Caco-2 (cell line): ENCODE measurements at regions of chr14 and their contacts with region 1.

Region 1: DNA sequence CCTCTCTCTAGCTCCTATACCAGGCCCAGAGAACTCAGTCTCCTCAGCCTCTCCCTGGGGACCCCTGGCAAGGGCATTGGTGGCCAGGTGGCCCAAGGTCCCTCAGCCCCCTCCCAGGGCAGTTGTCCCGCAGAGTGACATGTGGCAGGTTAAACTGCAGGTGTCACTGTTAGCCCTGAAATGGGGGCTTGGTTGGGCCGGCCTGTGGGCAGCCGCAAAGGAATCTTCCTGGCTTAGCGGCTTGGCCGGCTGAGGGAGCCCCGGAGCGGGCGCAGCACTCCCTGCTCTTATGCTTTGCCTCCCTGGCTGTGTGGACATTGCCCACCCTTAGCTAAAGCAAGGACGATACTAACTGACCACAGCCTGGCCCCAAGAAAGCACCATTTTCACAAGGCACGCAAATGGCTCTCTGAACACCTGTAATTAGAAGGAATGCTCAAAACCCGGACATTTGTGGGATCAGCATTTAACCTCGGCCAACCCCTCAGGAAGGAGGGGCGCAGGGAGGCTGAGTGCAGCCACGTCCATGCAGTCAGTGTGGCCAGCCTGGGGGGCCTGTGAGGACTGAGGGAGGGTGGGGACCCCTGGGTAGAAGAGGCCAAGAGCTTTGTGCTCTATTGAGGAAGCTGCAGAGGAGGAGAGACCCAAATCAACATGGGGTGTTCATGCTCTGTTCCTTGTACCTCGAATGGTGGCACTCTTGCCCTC is 82.2 kb downstream of the PAPOLA start:
- DNase-seq: peak; percentile 74 to 84
- H3K4me3 ChIP-seq: no peak overlapping the region
- H3K4me3 Mint-ChIP-seq: no peak overlapping the region
- H3K27ac Mint-ChIP-seq: no peak overlapping the region
- H3K4me1 ChIP-seq: no peaks in the 10 kb centered on the region
- H3K4me1 Mint-ChIP-seq: no peaks in the 10 kb centered on the region
- H3K27me3 ChIP-seq: no peaks in the 10 kb centered on the region
- H3K27me3 Mint-ChIP-seq: peaks cover 7% of the 10 kb centered on the region
- CTCF ChIP-seq: peak; percentile 74 to 90

Region 2: GRCh38 chr14:96666088-96666487 is 81.7 kb after region 1 on chr14:
- CTCF ChIA-PET with region 1: no interaction called
- POLR2A ChIA-PET with region 1: no interaction called
- intact Hi-C with region 1: loop called (anchors 1 kb)
- DNase-seq: peak in 1 of 2 experiments; percentile 7
- H3K4me3 ChIP-seq: no peak overlapping the region
- H3K4me3 Mint-ChIP-seq: no peak overlapping the region
- H3K27ac Mint-ChIP-seq: no peak overlapping the region
- H3K4me1 ChIP-seq: peaks cover 2% of the 10 kb centered on the region; the same call in 1 of the 2 replicates
- H3K4me1 Mint-ChIP-seq: peaks cover under 1% of the 10 kb centered on the region
- H3K27me3 ChIP-seq: peaks cover 1% of the 10 kb centered on the region; the same call in 1 of the 2 replicates
- H3K27me3 Mint-ChIP-seq: peaks cover 23% of the 10 kb centered on the region
- CTCF ChIP-seq: no peak

Region 3: DNA sequence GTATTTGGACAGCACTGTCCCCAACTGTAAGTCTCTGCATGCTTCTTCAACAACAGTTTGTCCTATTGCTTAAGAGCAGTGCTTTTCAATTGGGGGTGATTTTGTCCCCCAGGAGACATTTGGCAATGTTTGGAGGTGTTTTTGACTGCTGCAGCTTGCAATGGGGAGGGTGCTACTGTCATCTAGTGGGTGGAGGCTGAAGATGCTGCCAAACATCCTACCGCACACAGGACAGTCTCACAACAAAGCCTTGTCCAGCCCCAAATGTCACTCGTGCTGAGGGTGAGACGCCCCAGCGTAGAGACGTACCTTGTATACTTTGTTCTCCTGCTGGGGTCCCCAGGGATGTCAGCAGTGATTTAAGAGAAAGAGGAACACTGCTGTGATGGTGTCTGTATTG is 94.7 kb after region 1 on chr14:
- CTCF ChIA-PET with region 1: no interaction called
- POLR2A ChIA-PET with region 1: no interaction called
- intact Hi-C with region 1: loop called (anchors 1 kb)
- DNase-seq: no peak
- H3K4me3 ChIP-seq: no peak overlapping the region
- H3K4me3 Mint-ChIP-seq: no peak overlapping the region
- H3K27ac Mint-ChIP-seq: no peak overlapping the region
- H3K4me1 ChIP-seq: no peaks in the 10 kb centered on the region
- H3K4me1 Mint-ChIP-seq: no peaks in the 10 kb centered on the region
- H3K27me3 ChIP-seq: no peaks in the 10 kb centered on the region; the same call in 1 of the 2 replicates
- H3K27me3 Mint-ChIP-seq: peaks cover 18% of the 10 kb centered on the region
- CTCF ChIP-seq: no peak

Region 4: DNA sequence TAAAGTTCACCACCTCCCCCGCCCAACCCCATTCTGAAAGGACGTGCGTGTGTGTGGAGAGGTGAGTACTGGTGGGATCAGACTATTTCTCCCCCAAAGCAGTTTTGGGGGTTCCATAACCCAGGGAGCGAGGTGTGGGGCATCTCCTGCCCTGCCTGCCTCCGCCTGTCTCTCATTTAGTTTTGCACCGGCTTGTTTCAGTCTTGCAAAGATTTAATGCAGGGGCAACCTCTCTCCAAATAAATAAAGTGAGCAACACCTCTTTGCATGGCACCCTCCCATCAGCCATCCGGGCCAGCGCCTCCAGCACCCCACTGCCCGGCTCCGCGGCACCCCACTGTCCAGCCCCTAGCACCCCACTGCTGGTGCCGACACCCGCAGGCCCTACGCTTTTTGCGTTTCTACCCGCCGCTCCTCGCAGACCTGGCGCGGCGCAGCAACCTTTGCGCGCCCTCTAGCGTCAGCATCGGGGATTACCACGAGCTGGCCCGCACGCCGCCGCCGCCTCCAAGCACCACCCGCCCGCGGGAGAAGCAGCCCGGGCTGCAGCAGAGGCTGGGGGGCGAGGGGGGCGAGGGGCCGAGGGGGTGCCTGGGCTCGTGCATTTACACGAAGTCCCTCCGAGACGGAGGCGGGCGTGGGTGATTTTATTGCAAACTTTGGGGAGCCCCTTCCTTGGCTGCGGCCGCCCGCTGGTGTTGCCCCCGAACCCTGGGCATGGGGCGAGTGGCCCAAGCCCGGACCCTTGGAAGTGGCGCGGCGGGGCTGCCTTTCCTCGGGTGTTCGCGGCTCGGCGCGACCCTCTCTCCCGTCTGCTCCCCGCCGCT is 157.0 kb after region 1 on chr14:
- CTCF ChIA-PET with region 1: interaction called, 3 read pairs
- POLR2A ChIA-PET with region 1: interaction called, 3 read pairs
- intact Hi-C with region 1: loop called (anchors 1 kb)
- DNase-seq: peak; percentile 46 to 81
- H3K4me3 ChIP-seq: peak overlapping the region; percentile 34
- H3K4me3 Mint-ChIP-seq: peak overlapping the region; percentile 61
- H3K27ac Mint-ChIP-seq: no peak overlapping the region
- H3K4me1 ChIP-seq: no peaks in the 10 kb centered on the region
- H3K4me1 Mint-ChIP-seq: no peaks in the 10 kb centered on the region
- H3K27me3 ChIP-seq: peaks cover 5% of the 10 kb centered on the region; the same call in 1 of the 2 replicates
- H3K27me3 Mint-ChIP-seq: peaks cover 39% of the 10 kb centered on the region
- CTCF ChIP-seq: peak; percentile 83 to 90

Region 5: GRCh38 chr14:96852823-96853422 is 268.6 kb after region 1 on chr14:
- CTCF ChIA-PET with region 1: interaction called, 9 read pairs
- POLR2A ChIA-PET with region 1: no interaction called
- intact Hi-C with region 1: loop called (anchors 1 kb)
- DNase-seq: peak in 1 of 2 experiments; percentile 21
- H3K4me3 ChIP-seq: no peak overlapping the region
- H3K4me3 Mint-ChIP-seq: no peak overlapping the region
- H3K27ac Mint-ChIP-seq: no peak overlapping the region
- H3K4me1 ChIP-seq: peaks cover 7% of the 10 kb centered on the region; the same call in 1 of the 2 replicates
- H3K4me1 Mint-ChIP-seq: peaks cover 14% of the 10 kb centered on the region
- H3K27me3 ChIP-seq: no peaks in the 10 kb centered on the region
- H3K27me3 Mint-ChIP-seq: no peaks in the 10 kb centered on the region
- CTCF ChIP-seq: peak; percentile 53 to 64